Adrenal gland (tissue), 19 donors: ENCODE measurements at regions of chr15 and their contacts with region 1.

Region 1: GRCh38 chr15:42920519-42921227 is at the start of gene TTBK2:
- DNase-seq: peak; percentile 98 to 99 (median 99)
- H3K4me3 ChIP-seq: peak within 1 kb of the TSS; percentile 45 to 92 (median 85)
- H3K27ac ChIP-seq: peak within 1 kb of the TSS; percentile 35 to 94 (median 89)
- H3K4me1 ChIP-seq: peaks cover 9 to 25% of the 10 kb centered on the region in 2 donors
- H3K27me3 ChIP-seq: no peaks in the 10 kb centered on the region
- CTCF ChIP-seq: peak in 4 of 6 experiments; percentile 8 to 40 (median 26)
- POLR2A ChIP-seq: peak; percentile 88 to 89
- total RNA-seq, gene TTBK2: 13.8 to 46.6 (median 21.2) TPM

Region 2: GRCh38 chr15:42736793-42737528 is 183.7 kb before region 1 on chr15 and contains the start of gene CDAN1:
- intact Hi-C with region 1: loop called in 1 of 2 experiments (anchors 10 kb)
- DNase-seq: peak; percentile 93 to 96 (median 94)
- H3K4me3 ChIP-seq: peak within 1 kb of the TSS; percentile 49 to 98 (median 84)
- H3K27ac ChIP-seq: peak within 1 kb of the TSS; percentile 29 to 97 (median 87)
- H3K4me1 ChIP-seq: peaks cover 14 to 29% of the 10 kb centered on the region in 2 donors
- H3K27me3 ChIP-seq: no peaks in the 10 kb centered on the region
- CTCF ChIP-seq: no peak
- POLR2A ChIP-seq: peak; percentile 20 to 76
- total RNA-seq, gene CDAN1: 9.9 to 32.6 (median 14.1) TPM